ENCODE measurements at regions of chr1 and their contacts with region 1.

Region 1: DNA sequence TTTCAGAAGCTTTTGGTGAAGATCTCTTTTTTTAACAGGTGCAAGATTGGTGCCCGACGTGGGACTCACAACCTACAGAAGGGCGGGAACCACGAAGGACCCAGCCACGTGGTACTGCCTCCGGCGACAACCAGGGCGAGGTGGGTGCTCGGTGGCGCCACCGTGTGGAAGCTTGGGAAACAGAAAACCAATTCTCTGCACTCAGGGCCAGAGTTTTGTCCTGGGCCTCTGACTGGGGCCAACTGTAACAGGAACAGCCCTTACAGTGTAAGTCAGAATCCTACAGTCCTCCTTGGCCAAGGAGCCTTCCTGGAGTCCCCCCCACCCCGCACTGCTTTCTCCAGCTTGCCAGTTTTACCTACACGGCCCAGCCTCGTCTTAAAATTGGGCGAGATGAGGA is 11.6 kb upstream of the S100A7A start:
- DNase-seq: peak; percentile 12 to 42
- ATAC-seq: peak in 2 of 8 donors; percentile 45 to 56
- H3K4me3 ChIP-seq: no peak overlapping the region
- H3K27ac ChIP-seq: no peak overlapping the region
- H3K4me1 ChIP-seq: peaks cover 0 to 6% (median 0%) of the 10 kb centered on the region in 9 donors
- H3K27me3 ChIP-seq: peaks cover 0 to 28% (median 21%) of the 10 kb centered on the region in 7 donors
- CTCF ChIP-seq: peak in 8 of 9 donors; percentile 18 to 68 (median 40)

Region 2: GRCh38 chr1:153352523-153352922 is 52.2 kb before region 1 on chr1:
- intact Hi-C with region 1: loop called in 1 of 10 experiments (anchors 5 kb)
- DNase-seq: peak; percentile 50 to 54
- ATAC-seq: peak in 7 of 8 donors; percentile 62 to 86 (median 81)
- H3K4me3 ChIP-seq: no peak overlapping the region
- H3K27ac ChIP-seq: no peak overlapping the region
- H3K4me1 ChIP-seq: peaks cover 0 to 19% (median 0%) of the 10 kb centered on the region in 9 donors
- H3K27me3 ChIP-seq: peaks cover 0 to 44% (median 24%) of the 10 kb centered on the region in 7 donors
- CTCF ChIP-seq: peak; percentile 78 to 95 (median 93)